ENCODE measurements at regions of chr17 and their contacts with region 1.

Region 1: DNA sequence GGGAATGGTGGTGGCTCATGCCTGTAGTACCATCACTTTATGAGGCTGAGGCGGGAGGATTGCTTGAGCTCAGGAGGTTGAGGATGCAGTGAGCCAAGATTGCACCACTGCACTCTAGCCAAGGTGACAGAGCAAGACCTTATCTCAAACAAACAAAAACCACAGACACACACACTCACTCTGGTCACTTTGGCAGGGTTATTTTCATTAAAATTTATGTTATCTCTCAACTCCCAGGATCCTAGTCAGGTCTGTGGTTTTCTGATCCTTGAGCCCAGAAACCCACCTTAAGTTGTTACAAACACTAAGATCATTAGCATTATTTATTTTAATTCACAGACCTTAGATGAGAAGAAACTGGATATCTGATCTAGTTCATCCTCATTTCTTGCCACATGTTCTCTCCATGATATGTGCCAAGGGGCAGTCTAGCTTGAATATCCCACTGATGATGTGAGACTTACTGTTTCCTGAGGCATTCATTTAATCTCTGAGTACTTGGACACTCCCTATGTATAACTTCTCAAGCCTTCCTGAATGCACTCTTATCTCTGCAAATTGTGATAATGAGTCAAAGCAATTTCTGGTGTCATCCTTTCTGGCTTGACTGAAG is 9.6 kb downstream of the ABHD15 start:
- DNase-seq: peak in 1 of 2 experiments; percentile 39
- H3K4me3 ChIP-seq: no peak overlapping the region
- H3K4me3 Mint-ChIP-seq: peak overlapping the region; percentile 26
- H3K27ac Mint-ChIP-seq: peak overlapping the region; percentile 60
- H3K4me1 ChIP-seq: peaks cover 33% of the 10 kb centered on the region
- H3K4me1 Mint-ChIP-seq: peaks cover 17% of the 10 kb centered on the region
- H3K27me3 ChIP-seq: no peaks in the 10 kb centered on the region
- H3K27me3 Mint-ChIP-seq: no peaks in the 10 kb centered on the region
- CTCF ChIP-seq: no peak

Region 2: GRCh38 chr17:29533976-29534375 is 23.2 kb before region 1 on chr17:
- CTCF ChIA-PET with region 1: interaction called, 13 read pairs
- POLR2A ChIA-PET with region 1: interaction called, 5 read pairs
- intact Hi-C with region 1: no loop called
- DNase-seq: no peak
- H3K4me3 ChIP-seq: no peak overlapping the region
- H3K4me3 Mint-ChIP-seq: no peak overlapping the region
- H3K27ac Mint-ChIP-seq: no peak overlapping the region
- H3K4me1 ChIP-seq: no peaks in the 10 kb centered on the region
- H3K4me1 Mint-ChIP-seq: no peaks in the 10 kb centered on the region
- H3K27me3 ChIP-seq: no peaks in the 10 kb centered on the region
- H3K27me3 Mint-ChIP-seq: no peaks in the 10 kb centered on the region
- CTCF ChIP-seq: no peak

Region 3: DNA sequence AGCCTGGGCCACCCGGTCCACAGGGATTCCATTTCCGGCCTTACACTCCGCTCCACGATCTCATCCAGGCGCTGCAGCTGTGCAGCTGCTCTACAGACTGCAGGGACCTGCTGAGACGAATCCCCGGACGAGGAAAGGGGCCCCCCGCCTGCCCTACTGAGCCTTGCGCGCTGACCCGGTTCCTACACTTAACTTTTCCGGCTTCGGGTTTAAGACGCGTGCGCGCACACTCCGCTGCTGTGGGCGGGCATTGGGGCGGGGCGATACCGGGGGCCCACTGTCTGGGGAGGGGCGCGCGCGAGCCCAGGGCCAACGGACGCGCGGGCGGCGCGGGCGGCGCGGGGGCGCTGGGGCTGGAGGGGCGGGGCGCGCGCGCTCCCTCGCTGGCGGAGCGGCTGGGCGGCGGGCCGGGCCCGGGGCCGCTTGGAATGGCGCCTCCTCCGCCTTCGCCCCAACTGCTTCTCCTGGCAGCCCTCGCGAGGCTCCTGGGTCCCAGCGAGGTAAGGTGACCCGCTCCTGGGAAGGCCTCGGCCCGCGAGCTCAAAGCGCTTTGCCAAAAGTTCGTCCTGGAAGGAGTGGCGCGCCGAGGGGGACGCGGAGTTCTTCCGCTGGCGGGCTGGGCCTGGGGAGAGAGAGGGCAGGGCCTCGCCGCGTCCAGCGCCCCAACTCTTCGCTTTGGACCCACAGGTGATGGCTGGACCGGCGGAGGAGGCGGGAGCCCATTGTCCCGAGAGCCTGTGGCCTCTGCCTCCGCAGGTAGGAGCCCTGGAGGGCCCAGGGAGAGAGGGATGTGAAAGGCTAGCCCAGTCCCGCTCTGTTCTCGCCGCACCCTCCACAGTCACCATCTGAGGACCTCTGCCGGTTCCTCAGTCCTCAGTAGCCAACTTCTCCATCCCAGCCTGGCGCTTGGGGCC is 11.4 kb after region 1 on chr17 and contains the start of gene TP53I13:
- CTCF ChIA-PET with region 1: interaction called, 7 read pairs
- POLR2A ChIA-PET with region 1: interaction called, 6 read pairs
- intact Hi-C with region 1: loop called (anchors 1 kb)
- DNase-seq: peak; percentile 92 to 93
- H3K4me3 ChIP-seq: peak within 1 kb of the TSS; percentile 87
- H3K4me3 Mint-ChIP-seq: peak within 1 kb of the TSS; percentile 97
- H3K27ac Mint-ChIP-seq: peak within 1 kb of the TSS; percentile 85
- H3K4me1 ChIP-seq: peaks cover 10% of the 10 kb centered on the region; the same call in 1 of the 2 replicates
- H3K4me1 Mint-ChIP-seq: peaks cover 6% of the 10 kb centered on the region
- H3K27me3 ChIP-seq: no peaks in the 10 kb centered on the region
- H3K27me3 Mint-ChIP-seq: no peaks in the 10 kb centered on the region
- CTCF ChIP-seq: no peak
- total RNA-seq, gene TP53I13: 43.9 and 49.2 TPM in 2 replicates

Region 4: GRCh38 chr17:29625037-29625750 is 68.0 kb after region 1 on chr17:
- CTCF ChIA-PET with region 1: no interaction called
- POLR2A ChIA-PET with region 1: no interaction called
- intact Hi-C with region 1: no loop called
- DNase-seq: no peak
- H3K4me3 ChIP-seq: no peak overlapping the region
- H3K4me3 Mint-ChIP-seq: no peak overlapping the region
- H3K27ac Mint-ChIP-seq: no peak overlapping the region
- H3K4me1 ChIP-seq: peaks cover 5% of the 10 kb centered on the region; the same call in 1 of the 2 replicates
- H3K4me1 Mint-ChIP-seq: peaks cover 7% of the 10 kb centered on the region
- H3K27me3 ChIP-seq: no peaks in the 10 kb centered on the region
- H3K27me3 Mint-ChIP-seq: no peaks in the 10 kb centered on the region
- CTCF ChIP-seq: no peak